ENCODE measurements at regions of chr16 and their contacts with region 1.

Region 1: GRCh38 chr16:83898463-83899271 is at the start of gene MLYCD:
- DNase-seq: peak; percentile 82
- ATAC-seq: peak; percentile 95
- H3K4me3 Mint-ChIP-seq: peak within 1 kb of the TSS; percentile 96
- H3K27ac Mint-ChIP-seq: peak within 1 kb of the TSS; percentile 83
- H3K4me1 Mint-ChIP-seq: peaks cover 28% of the 10 kb centered on the region
- H3K27me3 Mint-ChIP-seq: peaks cover 3% of the 10 kb centered on the region
- total RNA-seq, gene MLYCD: 3.3 to 3.8 TPM

Region 2: GRCh38 chr16:83807710-83808572 is 90.7 kb before region 1 on chr16 and contains the start of gene HSBP1:
- CTCF ChIA-PET with region 1: no interaction called
- POLR2A ChIA-PET with region 1: no interaction called
- intact Hi-C with region 1: loop called (anchors 1 to 5 kb)
- DNase-seq: peak; percentile 97
- ATAC-seq: peak; percentile 98
- H3K4me3 Mint-ChIP-seq: peak within 1 kb of the TSS; percentile 98
- H3K27ac Mint-ChIP-seq: peak within 1 kb of the TSS; percentile 93
- H3K4me1 Mint-ChIP-seq: peaks cover 31% of the 10 kb centered on the region
- H3K27me3 Mint-ChIP-seq: peaks cover under 1% of the 10 kb centered on the region
- total RNA-seq, gene HSBP1: 73.1 to 80.7 TPM

Region 3: DNA sequence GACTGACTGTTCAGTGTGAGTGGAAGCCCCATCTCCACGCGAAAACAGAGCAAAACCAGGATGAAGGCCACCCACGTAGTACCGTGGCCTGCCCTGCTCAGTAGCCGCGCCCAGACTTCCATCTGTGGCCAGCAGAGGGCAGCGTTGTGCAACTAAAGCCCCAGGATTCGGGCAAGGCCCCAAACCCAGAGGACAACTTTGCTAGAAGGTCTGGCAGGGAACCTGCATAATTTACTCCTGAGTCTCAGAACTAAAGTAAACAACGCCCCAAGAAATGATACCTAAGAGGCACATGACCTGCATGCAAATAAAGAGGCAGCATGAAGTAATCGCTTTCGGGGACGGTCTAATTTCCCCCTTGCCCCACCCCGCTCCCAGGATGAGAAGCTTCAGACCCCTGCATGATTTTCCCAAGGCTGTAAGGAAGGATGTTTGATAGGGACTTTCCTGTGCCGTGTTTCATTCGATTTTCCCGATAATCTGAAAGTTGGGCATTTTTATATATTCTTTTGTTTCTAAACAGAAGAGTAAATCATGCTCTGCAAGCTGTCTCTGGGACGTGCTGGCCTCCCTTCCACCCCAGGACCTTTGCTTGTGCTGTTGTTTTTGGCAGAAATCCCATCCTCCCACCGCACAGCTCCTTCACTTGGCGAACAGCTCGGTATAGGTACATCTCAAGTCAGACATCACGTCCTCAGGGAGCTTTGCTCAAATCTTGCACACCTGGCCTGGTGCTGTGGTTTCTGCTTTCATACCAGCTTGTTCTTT is 72.3 kb before region 1 on chr16:
- CTCF ChIA-PET with region 1: interaction called, 10 read pairs
- POLR2A ChIA-PET with region 1: no interaction called
- intact Hi-C with region 1: loop called (anchors 1 to 5 kb)
- DNase-seq: peak; percentile 89
- ATAC-seq: peak; percentile 97
- H3K4me3 Mint-ChIP-seq: no peak overlapping the region
- H3K27ac Mint-ChIP-seq: no peak overlapping the region
- H3K4me1 Mint-ChIP-seq: peaks cover 4% of the 10 kb centered on the region
- H3K27me3 Mint-ChIP-seq: peaks cover 2% of the 10 kb centered on the region

Region 4: GRCh38 chr16:84013787-84014569 is 115.3 kb after region 1 on chr16:
- CTCF ChIA-PET with region 1: no interaction called
- POLR2A ChIA-PET with region 1: no interaction called
- intact Hi-C with region 1: loop called in 1 of 2 experiments (anchors 1 kb)
- DNase-seq: peak; percentile 91
- ATAC-seq: peak; percentile 90
- H3K4me3 Mint-ChIP-seq: no peak overlapping the region
- H3K27ac Mint-ChIP-seq: no peak overlapping the region
- H3K4me1 Mint-ChIP-seq: peaks cover 9% of the 10 kb centered on the region
- H3K27me3 Mint-ChIP-seq: no peaks in the 10 kb centered on the region

Measured in activated CD4-positive, alpha-beta T cell treated with anti-CD3 and anti-CD28 coated beads for 36 hours (primary cell).